ENCODE measurements at regions of chr2 and their contacts with region 1.

Region 1: DNA sequence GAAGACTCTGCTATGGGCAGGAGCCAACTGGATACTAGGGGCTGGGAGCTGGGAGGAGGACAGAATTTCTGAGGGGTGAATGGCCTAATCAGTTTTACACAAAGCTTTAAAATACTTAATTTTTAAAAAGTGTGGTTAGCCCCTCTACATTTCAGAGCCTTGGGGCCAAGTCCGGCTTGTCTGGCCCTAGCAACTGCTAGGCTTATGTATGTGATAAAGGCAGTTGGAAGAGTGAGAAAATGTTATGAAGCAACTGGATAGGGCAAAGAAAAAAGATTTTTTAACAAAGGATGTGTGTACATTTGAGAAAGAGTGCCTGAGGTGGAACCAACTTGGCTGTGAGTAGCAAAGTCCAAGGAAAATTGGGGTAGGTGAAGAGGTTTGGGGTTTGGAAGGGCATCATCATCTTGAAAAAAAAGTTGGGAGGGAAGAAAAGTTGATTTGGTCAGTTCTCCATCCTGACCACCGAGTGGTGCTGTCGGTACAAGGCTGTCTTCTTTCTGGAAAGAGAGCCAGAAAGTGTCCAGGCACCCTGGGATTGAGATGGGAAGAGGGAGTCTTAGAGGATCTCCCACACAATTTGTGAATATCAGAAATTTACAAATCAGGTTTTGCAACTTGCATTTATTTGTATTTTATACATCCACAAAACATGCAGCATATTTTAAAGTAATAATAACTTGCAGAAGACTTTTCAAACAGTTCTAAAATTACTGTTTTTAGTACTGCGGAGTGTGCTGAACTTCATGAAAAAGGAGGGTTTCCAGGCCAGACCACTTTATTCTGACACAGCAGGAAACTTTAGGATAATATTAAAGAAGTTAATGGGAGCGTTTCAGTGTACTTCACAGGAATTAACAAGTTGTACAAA is 10.5 kb upstream of the CDK15 start:
- DNase-seq: peak; percentile 73
- H3K4me3 ChIP-seq: no peak overlapping the region
- H3K27ac ChIP-seq: no peak overlapping the region
- H3K4me1 ChIP-seq: peaks cover 11% of the 10 kb centered on the region
- H3K27me3 ChIP-seq: no peaks in the 10 kb centered on the region
- CTCF ChIP-seq: peak; percentile 82

Region 2: GRCh38 chr2:200820573-200821234 is 975.1 kb before region 1 on chr2:
- CTCF ChIA-PET with region 1: no interaction called
- POLR2A ChIA-PET with region 1: no interaction called
- intact Hi-C with region 1: no loop called
- DNase-seq: no peak
- H3K4me3 ChIP-seq: no peak overlapping the region
- H3K27ac ChIP-seq: no peak overlapping the region
- H3K4me1 ChIP-seq: no peaks in the 10 kb centered on the region
- H3K27me3 ChIP-seq: no peaks in the 10 kb centered on the region
- CTCF ChIP-seq: no peak

Region 3: GRCh38 chr2:201654616-201655384 is 141.0 kb before region 1 on chr2:
- CTCF ChIA-PET with region 1: no interaction called
- POLR2A ChIA-PET with region 1: no interaction called
- intact Hi-C with region 1: no loop called
- DNase-seq: no peak
- H3K4me3 ChIP-seq: no peak overlapping the region
- H3K27ac ChIP-seq: no peak overlapping the region
- H3K4me1 ChIP-seq: peaks cover 6% of the 10 kb centered on the region
- H3K27me3 ChIP-seq: no peaks in the 10 kb centered on the region
- CTCF ChIP-seq: no peak

Region 4: DNA sequence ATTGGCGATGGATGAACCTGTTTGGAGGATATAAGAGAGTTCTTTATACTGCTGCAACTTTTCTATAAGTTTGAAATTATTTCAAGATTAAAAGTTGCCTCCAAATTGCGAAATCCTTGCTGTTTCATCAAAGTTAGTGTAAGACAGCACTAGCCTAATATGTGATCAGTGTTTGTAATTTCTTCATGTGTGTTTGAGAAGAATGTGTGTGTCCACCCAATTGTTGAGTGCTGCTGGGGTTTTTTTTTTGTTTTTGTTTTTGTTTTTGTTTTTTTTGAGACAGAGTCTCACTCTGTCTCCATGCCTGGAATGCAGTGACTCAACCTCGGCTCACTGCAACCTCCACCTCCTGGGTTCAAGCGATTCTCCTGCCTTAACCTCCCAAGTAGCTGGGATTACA is 43.9 kb after region 1 on chr2:
- CTCF ChIA-PET with region 1: no interaction called
- POLR2A ChIA-PET with region 1: no interaction called
- intact Hi-C with region 1: loop called (anchors 5 kb)
- DNase-seq: no peak
- H3K4me3 ChIP-seq: no peak overlapping the region
- H3K27ac ChIP-seq: no peak overlapping the region
- H3K4me1 ChIP-seq: peaks cover 12% of the 10 kb centered on the region
- H3K27me3 ChIP-seq: no peaks in the 10 kb centered on the region
- CTCF ChIP-seq: no peak

Region 5: GRCh38 chr2:201860636-201861066 is 64.8 kb after region 1 on chr2:
- CTCF ChIA-PET with region 1: no interaction called
- POLR2A ChIA-PET with region 1: no interaction called
- intact Hi-C with region 1: loop called (anchors 5 kb)
- DNase-seq: peak; percentile 89
- H3K4me3 ChIP-seq: no peak overlapping the region
- H3K27ac ChIP-seq: no peak overlapping the region
- H3K4me1 ChIP-seq: peaks cover 35% of the 10 kb centered on the region
- H3K27me3 ChIP-seq: no peaks in the 10 kb centered on the region
- CTCF ChIP-seq: peak; percentile 85

Region 6: DNA sequence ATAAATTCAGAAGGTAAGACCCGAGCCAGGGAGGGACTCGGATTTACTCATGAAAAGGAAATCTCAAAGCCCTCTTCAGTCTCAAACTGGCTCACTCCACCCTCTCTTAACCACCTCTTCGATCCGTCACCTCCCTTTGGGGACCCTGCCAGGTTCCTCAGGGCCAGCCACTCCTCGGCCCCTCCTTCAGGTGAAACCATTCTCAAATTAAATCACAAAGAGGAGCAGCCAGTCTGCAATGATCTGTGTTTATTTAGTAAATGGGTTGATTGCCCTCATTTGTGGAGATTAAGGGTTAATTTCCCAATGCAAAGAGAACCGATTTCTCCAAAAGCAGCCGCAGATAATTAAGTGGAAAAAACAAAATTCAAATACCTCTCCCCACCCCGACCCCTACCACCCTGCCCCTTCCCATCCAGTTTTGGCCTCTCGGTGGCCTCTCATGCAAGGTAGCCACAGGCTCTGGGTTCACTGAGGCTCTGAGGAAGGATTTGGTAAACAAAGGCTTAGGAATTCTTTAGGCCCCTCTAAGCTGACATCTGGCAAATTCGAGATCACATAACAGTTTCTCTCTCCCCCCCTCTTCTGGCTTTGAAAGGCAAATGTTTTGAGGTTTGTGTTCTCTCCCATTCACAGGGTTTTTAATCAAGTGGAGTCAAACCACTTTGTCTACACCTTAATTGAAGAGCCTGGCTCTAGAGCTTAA is 227.5 kb after region 1 on chr2:
- CTCF ChIA-PET with region 1: no interaction called
- POLR2A ChIA-PET with region 1: no interaction called
- intact Hi-C with region 1: no loop called
- DNase-seq: no peak
- H3K4me3 ChIP-seq: no peak overlapping the region
- H3K27ac ChIP-seq: no peak overlapping the region
- H3K4me1 ChIP-seq: no peaks in the 10 kb centered on the region
- H3K27me3 ChIP-seq: no peaks in the 10 kb centered on the region
- CTCF ChIP-seq: no peak

Region 7: GRCh38 chr2:202033321-202034248 is 237.7 kb after region 1 on chr2 and contains the start of gene FZD7:
- CTCF ChIA-PET with region 1: no interaction called
- POLR2A ChIA-PET with region 1: no interaction called
- intact Hi-C with region 1: loop called (anchors 2 kb)
- DNase-seq: peak; percentile 97
- H3K4me3 ChIP-seq: peak within 1 kb of the TSS; percentile 85
- H3K27ac ChIP-seq: peak within 1 kb of the TSS; percentile 95
- H3K4me1 ChIP-seq: peaks cover 38% of the 10 kb centered on the region
- H3K27me3 ChIP-seq: no peaks in the 10 kb centered on the region
- CTCF ChIP-seq: peak; percentile 28
- total RNA-seq, gene FZD7: 14.1 and 15.1 TPM in 2 replicates

Region 8: DNA sequence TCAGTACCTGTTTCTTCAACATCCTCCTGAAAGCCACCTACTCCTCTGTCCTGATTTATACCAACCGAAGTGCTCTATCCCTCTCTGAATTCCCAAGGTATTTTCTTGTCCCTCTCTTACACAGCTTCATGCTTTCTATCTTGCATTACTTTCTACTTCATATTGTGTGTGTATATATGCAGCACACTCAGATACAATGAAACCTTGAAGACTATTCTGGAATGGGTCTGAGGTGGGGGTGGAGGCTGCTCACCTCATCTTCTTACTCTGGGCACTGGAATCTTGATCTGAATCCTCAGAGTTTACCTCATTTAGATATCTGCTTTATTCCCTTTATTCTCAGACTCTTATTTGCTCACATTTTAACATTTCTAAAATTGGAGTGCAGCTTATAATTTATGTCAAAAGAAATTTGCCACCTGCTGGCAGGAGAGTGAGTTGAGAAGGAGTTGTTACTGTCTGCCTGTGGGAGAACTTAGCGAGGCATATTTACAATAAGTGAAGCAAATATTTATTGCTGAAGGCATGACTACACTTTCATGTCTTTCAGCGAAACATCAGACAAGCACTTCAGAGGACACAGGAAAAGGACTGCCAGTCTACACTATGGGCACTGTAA is 260.7 kb after region 1 on chr2:
- CTCF ChIA-PET with region 1: no interaction called
- POLR2A ChIA-PET with region 1: no interaction called
- intact Hi-C with region 1: loop called (anchors 5 kb)
- DNase-seq: peak; percentile 39
- H3K4me3 ChIP-seq: no peak overlapping the region
- H3K27ac ChIP-seq: no peak overlapping the region
- H3K4me1 ChIP-seq: peaks cover 20% of the 10 kb centered on the region
- H3K27me3 ChIP-seq: no peaks in the 10 kb centered on the region
- CTCF ChIP-seq: peak; percentile 55

Region 9: DNA sequence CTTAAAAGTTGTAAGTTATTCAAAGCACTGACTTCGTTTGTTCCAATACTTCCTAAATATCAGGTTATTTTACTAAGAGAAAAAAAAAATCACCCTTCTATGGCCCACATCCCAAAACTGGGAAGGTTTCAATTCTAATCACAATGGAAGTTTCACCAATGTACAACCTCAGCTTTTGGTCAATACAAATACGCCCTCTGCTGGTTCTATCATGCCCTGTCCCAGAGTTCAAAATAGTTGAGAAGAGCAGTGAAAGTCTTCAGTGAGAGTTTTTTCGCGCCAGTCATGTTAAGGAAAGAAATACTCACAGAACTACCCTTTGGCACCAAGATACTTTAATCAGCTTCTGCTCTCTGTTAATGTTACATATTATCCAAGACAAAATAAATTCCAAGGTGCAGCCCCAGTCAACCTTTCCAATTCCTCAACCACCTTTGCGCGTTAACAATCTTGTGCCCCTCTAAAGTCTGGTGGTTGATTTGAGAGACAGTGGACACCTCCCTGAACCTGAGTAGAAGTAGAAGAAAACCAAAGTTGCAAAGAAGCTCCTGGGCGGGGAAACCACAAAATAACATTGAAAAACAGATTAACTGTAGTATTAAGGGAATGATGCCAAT is 382.6 kb after region 1 on chr2:
- CTCF ChIA-PET with region 1: no interaction called
- POLR2A ChIA-PET with region 1: no interaction called
- intact Hi-C with region 1: loop called (anchors 2 kb)
- DNase-seq: peak; percentile 83
- H3K4me3 ChIP-seq: no peak overlapping the region
- H3K27ac ChIP-seq: no peak overlapping the region
- H3K4me1 ChIP-seq: no peaks in the 10 kb centered on the region
- H3K27me3 ChIP-seq: no peaks in the 10 kb centered on the region
- CTCF ChIP-seq: peak; percentile 89

Region 10: DNA sequence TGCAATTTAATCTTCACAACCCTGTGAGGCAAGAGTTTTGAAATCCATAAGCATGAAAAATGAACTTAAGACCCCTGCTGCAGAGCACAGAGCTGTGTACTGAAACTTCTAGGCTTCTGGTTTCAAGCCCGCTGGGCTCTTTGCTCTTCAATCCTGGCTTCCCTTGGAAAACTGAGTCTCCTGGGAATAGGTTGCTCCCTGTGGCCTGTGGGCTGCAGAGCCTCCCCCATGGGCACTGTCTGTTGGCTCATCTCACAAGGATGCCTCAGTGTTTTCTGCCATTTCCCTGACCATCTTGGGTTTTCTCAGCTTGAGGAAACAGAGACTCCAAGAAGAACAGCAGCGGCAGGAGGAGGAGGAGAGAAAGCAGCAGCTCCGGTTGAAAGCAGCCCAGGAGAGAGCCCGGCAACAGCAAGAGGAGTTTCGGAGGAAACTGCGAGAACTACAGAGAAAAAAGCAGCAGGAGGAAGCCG is 398.1 kb after region 1 on chr2:
- CTCF ChIA-PET with region 1: no interaction called
- POLR2A ChIA-PET with region 1: interaction called, 11 read pairs
- intact Hi-C with region 1: no loop called
- DNase-seq: no peak
- H3K4me3 ChIP-seq: no peak overlapping the region
- H3K27ac ChIP-seq: no peak overlapping the region
- H3K4me1 ChIP-seq: no peaks in the 10 kb centered on the region
- H3K27me3 ChIP-seq: no peaks in the 10 kb centered on the region
- CTCF ChIP-seq: no peak

Measured in A673 (cell line).